ENCODE measurements at regions of chr3 and their contacts with region 1.

Region 1: DNA sequence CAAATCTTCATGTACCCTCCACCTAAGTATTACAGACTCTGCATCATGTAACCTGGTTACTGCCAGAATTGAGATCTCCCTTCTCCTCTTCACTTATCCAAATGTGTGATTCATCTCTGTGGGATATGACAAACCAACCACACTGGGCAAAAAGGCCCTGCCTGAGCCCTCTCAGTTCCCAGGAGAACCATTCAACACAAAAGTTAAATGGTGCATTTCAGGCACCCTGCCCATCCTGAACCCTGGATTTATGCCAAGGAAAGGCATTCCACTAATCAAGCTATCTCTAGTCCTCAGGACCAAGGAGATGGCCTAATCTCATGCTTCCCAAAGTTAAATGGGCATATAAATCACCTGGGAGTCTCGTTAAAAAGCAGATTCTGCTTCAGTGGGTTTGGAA is 108.5 kb downstream of the TNIK start:
- DNase-seq: peak; percentile 98
- ATAC-seq: peak; percentile 76
- H3K4me3 ChIP-seq: no peak overlapping the region
- H3K27ac ChIP-seq: peak overlapping the region; percentile 76
- H3K4me1 ChIP-seq: peaks cover 80% of the 10 kb centered on the region
- H3K27me3 ChIP-seq: no peaks in the 10 kb centered on the region
- CTCF ChIP-seq: no peak

Region 2: DNA sequence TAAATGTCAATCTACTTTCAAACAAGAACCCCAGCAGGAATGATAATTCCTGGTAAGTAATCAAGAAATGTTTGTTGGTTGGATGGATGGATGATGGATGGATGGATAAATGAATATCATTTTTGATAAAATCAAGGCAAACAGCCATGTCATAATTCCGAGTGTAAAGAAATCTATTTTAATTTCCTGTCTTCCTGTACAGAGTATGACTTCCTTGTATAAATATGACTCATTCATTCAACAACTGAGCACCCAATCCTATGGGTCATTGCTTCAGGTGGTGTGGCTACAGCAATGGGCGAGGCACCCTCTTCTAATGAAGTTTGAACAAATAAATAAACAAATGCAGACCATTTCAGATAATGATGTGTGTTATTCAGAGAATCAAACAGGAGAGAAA is 90.2 kb before region 1 on chr3:
- CTCF ChIA-PET with region 1: no interaction called
- POLR2A ChIA-PET with region 1: no interaction called
- intact Hi-C with region 1: loop called (anchors 1 kb)
- DNase-seq: peak; percentile 78
- ATAC-seq: peak; percentile 97
- H3K4me3 ChIP-seq: peak overlapping the region; percentile 20
- H3K27ac ChIP-seq: peak overlapping the region; percentile 69
- H3K4me1 ChIP-seq: peaks cover 31% of the 10 kb centered on the region
- H3K27me3 ChIP-seq: no peaks in the 10 kb centered on the region
- CTCF ChIP-seq: no peak

Region 3: DNA sequence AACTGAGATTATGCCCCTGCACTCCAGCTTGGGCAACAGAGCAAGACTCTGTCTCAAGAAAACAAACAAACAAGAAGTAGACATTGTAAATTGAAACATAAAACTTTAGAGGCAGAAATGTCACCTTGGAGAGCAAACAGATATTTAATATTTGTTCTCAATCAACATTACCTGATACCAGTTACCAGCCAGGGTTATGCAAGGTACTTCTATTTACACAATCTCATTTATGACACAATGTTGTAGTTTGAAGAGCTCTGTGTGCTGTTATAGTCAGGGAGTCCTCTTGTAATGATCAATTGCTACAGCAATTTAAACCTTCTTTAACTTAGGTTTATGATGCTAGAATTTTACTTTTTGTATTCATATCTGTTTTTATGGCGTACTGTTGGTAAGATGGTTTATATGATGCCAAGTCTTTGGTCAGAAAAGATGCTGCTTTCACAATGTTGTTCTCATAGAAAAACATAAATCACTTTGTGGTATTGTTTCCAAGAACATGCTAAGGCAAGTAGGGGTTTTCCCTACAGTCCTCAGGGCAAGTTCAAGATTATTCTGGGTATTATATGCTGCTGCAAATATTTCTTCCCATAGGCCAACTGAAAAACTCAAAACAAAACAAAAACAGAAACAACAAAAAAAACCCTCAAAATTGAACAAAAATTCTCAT is 65.0 kb before region 1 on chr3:
- CTCF ChIA-PET with region 1: no interaction called
- POLR2A ChIA-PET with region 1: no interaction called
- intact Hi-C with region 1: no loop called
- DNase-seq: peak; percentile 16
- ATAC-seq: no peak
- H3K4me3 ChIP-seq: no peak overlapping the region
- H3K27ac ChIP-seq: no peak overlapping the region
- H3K4me1 ChIP-seq: peaks cover 12% of the 10 kb centered on the region
- H3K27me3 ChIP-seq: no peaks in the 10 kb centered on the region
- CTCF ChIP-seq: no peak

Region 4: GRCh38 chr3:171366043-171366442 is 14.4 kb after region 1 on chr3:
- CTCF ChIA-PET with region 1: no interaction called
- POLR2A ChIA-PET with region 1: no interaction called
- intact Hi-C with region 1: loop called (anchors 1 kb)
- DNase-seq: peak; percentile 76
- ATAC-seq: peak; percentile 80
- H3K4me3 ChIP-seq: no peak overlapping the region
- H3K27ac ChIP-seq: peak overlapping the region; percentile 69
- H3K4me1 ChIP-seq: peaks cover 17% of the 10 kb centered on the region
- H3K27me3 ChIP-seq: no peaks in the 10 kb centered on the region
- CTCF ChIP-seq: no peak

Region 5: GRCh38 chr3:171736556-171736955 is 384.9 kb after region 1 on chr3:
- CTCF ChIA-PET with region 1: no interaction called
- POLR2A ChIA-PET with region 1: no interaction called
- intact Hi-C with region 1: no loop called
- DNase-seq: no peak
- ATAC-seq: no peak
- H3K4me3 ChIP-seq: no peak overlapping the region
- H3K27ac ChIP-seq: no peak overlapping the region
- H3K4me1 ChIP-seq: no peaks in the 10 kb centered on the region
- H3K27me3 ChIP-seq: no peaks in the 10 kb centered on the region
- CTCF ChIP-seq: no peak

Measured in PC-3 (cell line).